MCF 10A (cell line): ENCODE measurements at regions of chr1 and their contacts with region 1.

Region 1: GRCh38 chr1:110780600-110781484 is 92.1 kb upstream of the CD53 start:
- DNase-seq: peak; percentile 79
- H3K4me3 Mint-ChIP-seq: no peak overlapping the region
- H3K27ac Mint-ChIP-seq: no peak overlapping the region
- H3K4me1 Mint-ChIP-seq: no peaks in the 10 kb centered on the region
- H3K27me3 Mint-ChIP-seq: peaks cover 17% of the 10 kb centered on the region
- CTCF ChIP-seq: peak; percentile 76

Region 2: DNA sequence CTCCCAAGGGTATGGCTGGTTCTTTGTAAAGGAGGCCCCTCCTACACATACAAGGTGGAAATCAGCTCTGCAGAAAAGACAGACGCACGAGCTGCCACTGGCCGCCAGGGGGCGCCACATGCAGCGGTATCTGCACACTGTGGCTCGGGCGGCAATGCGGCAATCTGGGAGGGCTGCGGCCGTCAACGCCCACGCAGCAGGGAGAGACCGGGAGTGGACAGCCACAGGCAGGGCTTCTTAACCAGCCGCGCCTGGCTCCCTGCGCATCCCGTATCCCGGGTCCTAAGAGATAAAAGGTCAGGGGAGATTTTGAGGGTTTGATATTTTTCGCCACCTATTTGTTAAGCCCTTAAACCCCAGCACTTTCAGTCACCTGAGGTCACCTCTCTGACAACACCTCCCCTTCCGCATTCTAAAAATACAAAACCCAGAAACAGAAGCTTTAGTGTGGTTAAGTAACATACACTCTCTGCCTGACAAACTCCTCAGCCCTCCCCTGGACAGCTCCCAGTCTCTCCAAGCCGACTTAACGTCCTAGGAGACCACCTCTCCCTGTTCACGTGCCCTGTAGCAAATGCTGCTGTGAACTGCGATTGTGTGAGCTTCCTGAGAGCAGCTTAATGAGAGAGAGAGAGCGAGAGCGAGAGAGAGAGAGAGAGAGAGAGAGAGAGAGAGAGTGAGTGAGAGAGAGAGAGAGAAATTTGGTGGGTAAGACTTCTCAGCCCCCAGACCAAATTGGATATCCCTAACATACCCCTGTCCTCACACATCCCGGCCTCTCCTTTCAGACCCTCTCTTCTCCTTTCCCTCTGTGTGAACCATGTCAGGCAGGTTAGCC is 161.2 kb before region 1 on chr1:
- CTCF ChIA-PET with region 1: interaction called, 54 read pairs
- POLR2A ChIA-PET with region 1: interaction called, 5 read pairs
- intact Hi-C with region 1: loop called (anchors 1 kb)
- DNase-seq: peak; percentile 81
- H3K4me3 Mint-ChIP-seq: no peak overlapping the region
- H3K27ac Mint-ChIP-seq: no peak overlapping the region
- H3K4me1 Mint-ChIP-seq: peaks cover 6% of the 10 kb centered on the region
- H3K27me3 Mint-ChIP-seq: peaks cover 74% of the 10 kb centered on the region
- CTCF ChIP-seq: peak; percentile 94

Region 3: DNA sequence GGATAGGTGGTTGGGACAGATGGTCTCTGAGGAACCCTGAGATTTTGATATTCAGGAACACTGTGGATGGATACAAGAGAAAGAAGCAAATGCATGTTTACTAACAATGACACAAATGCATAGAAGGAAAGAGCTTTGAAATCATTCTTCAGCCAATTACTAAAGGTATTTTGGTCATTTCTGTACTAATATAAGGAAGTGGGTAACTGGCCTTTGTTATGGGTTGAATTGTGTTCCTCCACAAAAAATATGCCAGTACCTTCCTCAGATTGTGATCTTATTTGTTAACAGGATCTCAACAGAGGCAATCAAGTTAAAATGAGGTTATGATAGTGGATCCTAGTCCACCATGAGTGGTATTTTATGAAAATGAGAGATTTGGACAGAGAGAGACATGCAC is 37.4 kb before region 1 on chr1:
- CTCF ChIA-PET with region 1: interaction called, 10 read pairs
- POLR2A ChIA-PET with region 1: no interaction called
- intact Hi-C with region 1: no loop called
- DNase-seq: no peak
- H3K4me3 Mint-ChIP-seq: no peak overlapping the region
- H3K27ac Mint-ChIP-seq: no peak overlapping the region
- H3K4me1 Mint-ChIP-seq: no peaks in the 10 kb centered on the region
- H3K27me3 Mint-ChIP-seq: peaks cover 26% of the 10 kb centered on the region
- CTCF ChIP-seq: no peak

Region 4: DNA sequence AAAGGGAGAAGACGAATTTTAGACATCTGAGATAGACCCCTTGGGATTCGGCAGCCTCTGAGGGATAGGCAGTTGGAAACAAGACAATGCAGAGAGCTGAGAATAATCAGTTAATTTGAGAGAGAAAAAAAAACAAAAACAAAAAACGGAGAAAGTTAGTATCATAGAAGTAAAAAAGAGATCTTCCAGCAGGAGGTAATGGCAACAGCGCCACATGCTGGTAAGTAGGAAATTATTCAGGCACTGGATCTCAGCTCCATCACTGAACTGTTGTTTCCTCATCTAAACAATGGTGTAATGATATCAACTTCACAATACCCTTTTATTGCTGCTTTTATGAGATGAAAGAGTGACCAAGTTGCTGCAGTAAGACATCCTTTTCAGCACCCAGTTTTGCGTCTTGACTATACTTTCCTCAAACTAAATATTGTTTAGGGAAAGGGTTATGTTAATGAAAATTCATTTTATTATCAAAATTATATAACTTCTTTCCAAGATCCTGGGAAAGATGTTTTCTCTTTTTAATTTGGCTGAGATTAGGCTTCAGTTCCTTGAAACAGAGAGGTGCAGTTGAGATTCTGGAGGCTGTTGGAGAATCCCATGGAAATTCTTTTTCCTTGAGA is 14.7 kb before region 1 on chr1:
- CTCF ChIA-PET with region 1: interaction called, 107 read pairs
- POLR2A ChIA-PET with region 1: no interaction called
- intact Hi-C with region 1: no loop called
- DNase-seq: peak; percentile 58
- H3K4me3 Mint-ChIP-seq: no peak overlapping the region
- H3K27ac Mint-ChIP-seq: no peak overlapping the region
- H3K4me1 Mint-ChIP-seq: no peaks in the 10 kb centered on the region
- H3K27me3 Mint-ChIP-seq: peaks cover 58% of the 10 kb centered on the region
- CTCF ChIP-seq: peak; percentile 83

Region 5: DNA sequence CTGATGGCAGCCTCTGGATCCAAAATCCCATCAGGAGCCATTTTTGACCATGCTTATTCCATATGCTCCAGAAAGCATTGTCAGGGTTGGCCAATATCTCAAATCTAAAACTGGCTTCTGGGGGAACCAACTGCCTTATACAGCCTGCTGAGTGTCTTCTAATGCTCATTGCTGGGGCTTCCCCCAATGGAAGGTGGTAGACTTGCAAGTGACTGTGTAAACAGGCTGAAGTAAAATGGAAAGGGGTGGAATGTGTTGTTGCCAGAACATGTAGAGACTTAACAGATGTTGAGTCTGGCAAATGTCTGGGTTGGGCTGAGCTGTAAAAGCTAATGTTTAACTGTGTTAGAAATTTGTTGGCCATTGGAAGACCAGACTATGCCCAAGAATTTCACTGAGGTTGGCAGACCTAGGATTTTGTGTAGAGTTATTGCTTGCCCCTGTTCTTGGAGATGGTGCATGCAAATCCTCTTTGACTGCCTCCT is 205.6 kb after region 1 on chr1:
- CTCF ChIA-PET with region 1: interaction called, 27 read pairs
- POLR2A ChIA-PET with region 1: no interaction called
- intact Hi-C with region 1: no loop called
- DNase-seq: no peak
- H3K4me3 Mint-ChIP-seq: no peak overlapping the region
- H3K27ac Mint-ChIP-seq: no peak overlapping the region
- H3K4me1 Mint-ChIP-seq: no peaks in the 10 kb centered on the region
- H3K27me3 Mint-ChIP-seq: peaks cover 28% of the 10 kb centered on the region
- CTCF ChIP-seq: no peak